IMR-90 (cell line): ENCODE measurements at regions of chr4 and their contacts with region 1.

Region 1: GRCh38 chr4:184649026-184649970 is at the starts of genes CASP3 and PRIMPOL:
- DNase-seq: peak; percentile 92
- ATAC-seq: peak; percentile 93
- H3K4me3 ChIP-seq: peak within 1 kb of the TSS; percentile 80
- H3K27ac ChIP-seq: peak within 1 kb of the TSS; percentile 84
- H3K4me1 ChIP-seq: peaks cover 8% of the 10 kb centered on the region
- H3K27me3 ChIP-seq: no peaks in the 10 kb centered on the region
- CTCF ChIP-seq: peak; percentile 49
- POLR2A ChIP-seq: peak; percentile 97
- RAD21 ChIP-seq: peak; percentile 53
- total RNA-seq, gene CASP3: 26.7 and 58.9 TPM in 2 replicates
- total RNA-seq, gene PRIMPOL: 5.6 and 10.0 TPM in 2 replicates

Region 2: GRCh38 chr4:184263910-184264732 is 385.2 kb before region 1 on chr4:
- CTCF ChIA-PET with region 1: interaction called, 4 read pairs
- POLR2A ChIA-PET with region 1: no interaction called
- dilution Hi-C with region 1: no loop called
- in situ Hi-C with region 1: no loop called
- intact Hi-C with region 1: loop called (anchors 2 kb)
- DNase-seq: peak; percentile 90
- ATAC-seq: peak; percentile 74
- H3K4me3 ChIP-seq: no peak overlapping the region
- H3K27ac ChIP-seq: no peak overlapping the region
- H3K4me1 ChIP-seq: peaks cover 14% of the 10 kb centered on the region
- H3K27me3 ChIP-seq: no peaks in the 10 kb centered on the region
- CTCF ChIP-seq: peak; percentile 91
- POLR2A ChIP-seq: no peak
- RAD21 ChIP-seq: peak; percentile 82

Region 3: GRCh38 chr4:184474263-184475095 is 174.8 kb before region 1 on chr4 and contains the start of gene IRF2:
- CTCF ChIA-PET with region 1: no interaction called
- POLR2A ChIA-PET with region 1: no interaction called
- dilution Hi-C with region 1: no loop called
- in situ Hi-C with region 1: no loop called
- intact Hi-C with region 1: loop called (anchors 5 kb)
- DNase-seq: peak; percentile 97
- ATAC-seq: peak; percentile 79
- H3K4me3 ChIP-seq: peak within 1 kb of the TSS; percentile 91
- H3K27ac ChIP-seq: peak within 1 kb of the TSS; percentile 97
- H3K4me1 ChIP-seq: peaks cover 4% of the 10 kb centered on the region; the same call in 1 of the 2 replicates
- H3K27me3 ChIP-seq: no peaks in the 10 kb centered on the region
- CTCF ChIP-seq: no peak
- POLR2A ChIP-seq: peak; percentile 84
- RAD21 ChIP-seq: no peak; the same call in 1 of the 2 replicates
- total RNA-seq, gene IRF2: 20.3 and 21.9 TPM in 2 replicates

Region 4: DNA sequence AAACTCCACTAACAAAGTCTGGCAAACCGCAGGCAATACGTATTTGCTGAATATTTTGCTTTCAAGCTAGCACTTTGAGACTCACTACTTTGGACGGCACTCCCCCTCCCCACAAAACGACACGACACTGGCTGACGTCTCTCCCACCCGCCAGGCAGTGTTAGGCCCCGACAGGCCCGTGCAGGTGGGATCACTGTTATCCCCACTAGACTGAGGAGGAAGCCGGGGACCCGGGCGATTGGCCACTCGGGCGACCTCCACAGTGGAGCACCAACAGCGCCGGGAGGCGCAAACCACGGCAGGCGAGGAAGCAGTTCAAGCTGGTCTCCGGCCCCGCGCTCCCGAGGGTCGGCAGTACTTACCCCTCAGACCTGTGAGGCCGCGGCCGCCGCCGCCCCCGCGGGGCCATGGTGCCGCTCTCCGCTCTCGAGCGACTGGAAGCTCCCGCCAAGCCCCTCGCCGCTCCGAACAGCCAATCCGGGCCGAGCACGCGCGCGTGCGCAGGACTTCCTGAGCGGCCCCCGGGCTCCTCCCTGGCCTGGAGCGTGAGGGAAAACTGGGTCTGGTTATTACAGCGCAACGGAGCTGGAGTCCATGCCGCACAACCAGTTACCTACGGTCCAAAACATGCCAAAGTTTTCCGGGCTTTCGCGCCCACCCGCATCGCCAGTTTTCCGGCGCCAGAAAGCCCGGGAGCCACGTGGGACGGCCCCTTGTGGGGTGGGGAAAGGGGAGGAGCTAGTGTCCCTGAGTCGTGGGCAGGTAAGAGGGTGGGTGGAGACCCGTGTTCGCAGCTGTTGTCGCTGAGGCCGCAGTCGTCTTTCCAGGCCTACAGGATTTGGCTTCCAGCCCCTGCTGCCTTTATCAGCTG is 84.6 kb after region 1 on chr4 and contains the start of gene CENPU:
- CTCF ChIA-PET with region 1: no interaction called
- POLR2A ChIA-PET with region 1: no interaction called
- dilution Hi-C with region 1: no loop called
- in situ Hi-C with region 1: no loop called
- intact Hi-C with region 1: loop called (anchors 1 kb)
- DNase-seq: peak; percentile 98
- ATAC-seq: peak; percentile 98
- H3K4me3 ChIP-seq: peak within 1 kb of the TSS; percentile 74
- H3K27ac ChIP-seq: peak within 1 kb of the TSS; percentile 11; the same call in 1 of the 2 replicates
- H3K4me1 ChIP-seq: peaks cover 4% of the 10 kb centered on the region
- H3K27me3 ChIP-seq: no peaks in the 10 kb centered on the region
- CTCF ChIP-seq: no peak
- POLR2A ChIP-seq: no peak; the same call in 1 of the 2 replicates
- RAD21 ChIP-seq: no peak
- total RNA-seq, gene CENPU: 13.6 and 26.7 TPM in 2 replicates

Region 5: DNA sequence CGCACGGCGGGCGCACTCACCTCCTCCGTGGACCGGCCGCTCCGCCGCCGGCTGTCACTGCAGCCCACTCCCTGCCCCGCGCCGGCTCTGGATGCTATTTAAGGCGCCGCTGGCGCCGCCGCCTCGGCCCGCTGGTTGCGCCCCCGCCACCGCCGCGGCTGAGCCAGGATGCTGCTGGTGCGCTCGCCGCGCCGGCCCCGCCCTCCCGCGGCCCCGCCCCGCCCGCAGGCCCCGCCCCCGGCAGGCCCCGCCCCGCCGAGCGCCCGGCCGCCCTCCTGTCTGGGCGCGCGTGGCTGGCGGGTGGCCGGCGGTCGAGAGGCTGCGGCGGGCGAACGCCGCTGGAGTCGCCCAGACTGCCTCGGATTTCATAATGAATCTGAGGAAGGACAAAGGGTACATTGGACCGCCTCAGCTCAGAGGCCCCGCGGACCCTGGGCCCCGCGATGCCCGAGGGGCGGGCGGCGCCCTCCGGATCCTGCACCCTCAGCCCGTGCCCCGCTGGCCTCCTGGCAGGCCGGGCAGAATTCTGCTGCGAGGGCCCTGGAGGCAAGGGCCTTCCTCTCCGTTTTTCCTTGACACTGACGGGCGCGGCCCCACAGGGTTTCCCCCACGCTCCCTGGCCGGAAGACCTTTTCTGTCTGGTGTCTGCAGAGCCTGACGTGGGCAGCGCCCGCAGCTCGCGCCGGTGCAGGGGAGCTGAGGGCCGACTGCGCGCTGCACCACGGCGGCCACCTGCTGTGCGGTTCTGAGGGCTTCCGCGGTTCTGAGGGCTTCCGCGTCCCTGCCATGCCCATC is 176.8 kb after region 1 on chr4 and contains the start of gene ACSL1:
- CTCF ChIA-PET with region 1: no interaction called
- POLR2A ChIA-PET with region 1: no interaction called
- dilution Hi-C with region 1: no loop called
- in situ Hi-C with region 1: no loop called
- intact Hi-C with region 1: loop called (anchors 1 kb)
- DNase-seq: peak; percentile 53
- ATAC-seq: peak; percentile 97
- H3K4me3 ChIP-seq: peak within 1 kb of the TSS; percentile 84
- H3K27ac ChIP-seq: no peak within 1 kb of the TSS; the same call in 1 of the 2 replicates
- H3K4me1 ChIP-seq: peaks cover 2% of the 10 kb centered on the region; the same call in 1 of the 2 replicates
- H3K27me3 ChIP-seq: peaks cover 5% of the 10 kb centered on the region; the same call in 1 of the 2 replicates
- CTCF ChIP-seq: 0 out of 2 replicates have a peak, but pooled peaks have one; percentile 9
- POLR2A ChIP-seq: peak; percentile 90
- RAD21 ChIP-seq: no peak
- total RNA-seq, gene ACSL1: 26.0 and 27.5 TPM in 2 replicates